Left cardiac atrium (tissue), 4 donors: ENCODE measurements at regions of chr7 and their contacts with region 1.

Region 1: DNA sequence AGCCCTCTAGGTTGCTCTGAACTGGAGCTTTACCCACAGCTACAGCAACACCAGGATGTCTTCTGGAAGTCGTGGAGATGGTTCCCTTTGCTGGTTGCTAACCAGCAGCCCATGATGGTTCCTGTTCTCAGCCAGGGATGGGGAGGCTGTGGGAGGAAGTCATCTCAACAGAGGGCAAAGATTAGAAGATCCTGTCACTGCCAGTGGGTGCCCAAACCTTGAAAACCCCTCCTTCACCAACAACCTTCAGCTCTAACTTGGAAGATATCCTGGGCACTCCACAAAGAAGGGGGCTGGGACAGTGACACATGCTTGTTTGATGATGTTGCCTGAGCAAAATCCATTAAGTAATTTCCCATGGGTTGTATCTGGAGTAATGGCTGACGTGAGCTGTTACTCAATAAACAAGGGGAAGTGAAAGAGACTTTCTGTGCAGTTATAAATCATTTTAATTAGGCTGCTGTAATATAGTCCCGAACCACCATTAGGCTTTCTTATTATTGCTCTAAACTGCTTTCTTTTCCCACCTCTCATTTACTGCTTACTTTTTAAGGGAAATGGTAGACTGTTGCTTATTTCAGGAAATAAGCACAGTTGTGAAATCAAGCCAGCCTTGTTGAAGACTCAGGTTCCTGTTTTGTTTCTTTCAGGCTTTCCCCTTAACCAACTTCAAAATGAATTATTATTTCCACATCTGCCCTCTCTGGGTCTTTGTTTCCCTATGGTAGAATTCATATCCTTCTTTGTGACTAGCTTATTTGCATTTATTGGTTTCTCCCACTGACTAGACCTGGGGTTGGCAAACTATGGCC is 124.8 kb downstream of the PPP1R17 start:
- DNase-seq: peak; percentile 21
- ATAC-seq: peak in 1 of 2 donors; percentile 61

Region 2: DNA sequence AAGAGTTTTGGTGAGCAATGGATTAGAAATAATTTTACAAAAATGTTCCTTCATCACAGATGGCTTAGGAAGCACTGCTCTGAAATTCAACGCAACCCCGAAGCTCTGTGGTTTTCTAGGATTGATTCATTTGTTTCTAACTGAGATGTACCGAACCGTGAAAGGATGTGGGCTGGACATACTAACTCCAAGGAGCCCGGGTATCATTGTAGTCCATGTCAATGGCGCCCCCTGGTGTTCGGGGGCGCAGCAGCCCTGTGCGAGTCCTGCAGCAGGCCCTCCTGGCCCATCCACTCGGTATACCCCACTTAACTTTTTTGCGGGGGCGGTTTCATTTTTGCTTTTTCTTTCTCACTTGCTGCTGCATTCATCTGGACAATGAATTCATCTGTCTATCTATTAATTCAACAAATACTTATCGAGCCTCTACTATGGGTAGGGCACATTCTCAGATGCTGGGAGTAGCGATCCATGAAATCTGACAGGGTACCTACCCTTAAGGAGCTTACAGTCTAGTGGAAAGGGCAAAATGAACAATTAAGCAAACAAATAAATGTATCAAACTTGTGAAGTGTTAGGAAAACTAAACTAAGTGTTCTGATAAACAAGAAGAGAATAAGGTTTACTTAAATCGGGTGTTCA is 323.2 kb before region 1 on chr7:
- intact Hi-C with region 1: no loop called
- DNase-seq: peak; percentile 26
- ATAC-seq: no peak

Region 3: DNA sequence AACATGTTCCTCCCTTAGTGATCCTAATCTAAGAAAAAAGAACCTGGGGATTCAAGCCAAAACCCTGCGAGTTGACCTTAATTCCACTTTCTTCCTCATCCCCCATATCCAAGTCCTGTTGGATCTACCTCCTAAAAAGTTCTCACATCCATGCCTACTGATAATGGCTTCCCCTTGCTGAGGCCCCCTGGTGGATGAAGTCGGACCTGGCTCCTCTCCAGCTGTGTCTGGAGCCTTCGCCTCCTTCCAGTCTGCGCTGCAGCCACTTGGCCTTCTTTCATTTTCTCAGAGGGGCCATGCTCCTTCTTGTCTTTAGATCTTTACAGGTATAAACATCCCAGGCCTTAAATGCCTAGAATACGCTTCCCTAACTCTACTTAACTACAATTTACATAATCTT is 250.3 kb after region 1 on chr7:
- intact Hi-C with region 1: loop called in 1 of 2 experiments (anchors 10 kb)
- DNase-seq: peak; percentile 36
- ATAC-seq: no peak